Thyroid gland (tissue), 4 donors: ENCODE measurements at regions of chr1 and their contacts with region 1.

Region 1: GRCh38 chr1:115595279-115596079 is 46.3 kb upstream of the VANGL1 start:
- DNase-seq: peak; percentile 98
- H3K4me3 ChIP-seq: no peak overlapping the region
- H3K27ac ChIP-seq: no peak overlapping the region
- H3K4me1 ChIP-seq: peaks cover 4 to 7% of the 10 kb centered on the region in 2 donors
- H3K27me3 ChIP-seq: no peaks in the 10 kb centered on the region
- CTCF ChIP-seq: peak; percentile 68 to 97 (median 94)
- POLR2A ChIP-seq: no peak

Region 2: DNA sequence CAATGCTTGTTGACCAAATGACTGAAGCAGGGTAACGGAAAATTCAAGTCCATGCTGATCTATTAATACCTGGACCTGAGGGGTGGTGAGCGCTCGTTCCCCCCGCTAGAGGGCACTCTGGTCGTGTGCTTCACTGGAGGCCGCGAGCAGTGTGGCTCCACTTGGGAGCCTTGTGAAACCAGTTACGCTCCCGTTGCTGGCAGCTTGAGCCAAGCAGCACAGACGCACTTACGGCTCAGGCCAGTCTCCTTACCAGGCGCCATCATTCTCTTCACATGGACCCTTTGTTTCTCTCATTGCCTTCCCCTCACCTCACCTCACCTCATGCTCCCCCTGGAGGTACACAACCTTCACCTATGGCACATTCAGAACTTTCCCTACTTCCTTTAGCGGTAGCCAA is 456.5 kb before region 1 on chr1:
- intact Hi-C with region 1: loop called (anchors 2 kb)
- DNase-seq: peak; percentile 92 to 93
- H3K4me3 ChIP-seq: no peak overlapping the region
- H3K27ac ChIP-seq: no peak overlapping the region
- H3K4me1 ChIP-seq: peaks cover 0 to 4% of the 10 kb centered on the region in 2 donors
- H3K27me3 ChIP-seq: no peaks in the 10 kb centered on the region
- CTCF ChIP-seq: peak; percentile 63 to 94 (median 84)
- POLR2A ChIP-seq: no peak

Region 3: GRCh38 chr1:115469703-115470476 is 125.6 kb before region 1 on chr1:
- intact Hi-C with region 1: loop called (anchors 10 kb)
- DNase-seq: peak; percentile 83 to 89
- H3K4me3 ChIP-seq: no peak overlapping the region
- H3K27ac ChIP-seq: peak overlapping the region; percentile 53 to 65 (median 53)
- H3K4me1 ChIP-seq: peaks cover 9 to 27% of the 10 kb centered on the region in 2 donors
- H3K27me3 ChIP-seq: no peaks in the 10 kb centered on the region
- CTCF ChIP-seq: peak; percentile 44 to 93 (median 80)
- POLR2A ChIP-seq: no peak